ENCODE measurements at regions of chr6 and their contacts with region 1.

Region 1: GRCh38 chr6:47413752-47414422 is 63.7 kb upstream of the CD2AP start:
- DNase-seq: peak; percentile 61
- ATAC-seq: peak; percentile 90
- H3K4me3 ChIP-seq: peak overlapping the region; percentile 41 to 53
- H3K27ac ChIP-seq: peak overlapping the region; percentile 71; the same call in 1 of the 2 replicates
- H3K4me1 ChIP-seq: peaks cover 2% of the 10 kb centered on the region; the same call in 1 of the 2 replicates
- H3K27me3 ChIP-seq: no peaks in the 10 kb centered on the region
- CTCF ChIP-seq: peak; percentile 82

Region 2: GRCh38 chr6:47605500-47605899 is 191.6 kb after region 1 on chr6:
- CTCF ChIA-PET with region 1: no interaction called
- POLR2A ChIA-PET with region 1: no interaction called
- in situ Hi-C with region 1: no loop called
- intact Hi-C with region 1: loop called (anchors 5 kb)
- DNase-seq: no peak
- ATAC-seq: no peak
- H3K4me3 ChIP-seq: no peak overlapping the region
- H3K27ac ChIP-seq: no peak overlapping the region
- H3K4me1 ChIP-seq: no peaks in the 10 kb centered on the region
- H3K27me3 ChIP-seq: no peaks in the 10 kb centered on the region
- CTCF ChIP-seq: no peak

Region 3: GRCh38 chr6:47733879-47734558 is 320.1 kb after region 1 on chr6:
- CTCF ChIA-PET with region 1: no interaction called
- POLR2A ChIA-PET with region 1: no interaction called
- in situ Hi-C with region 1: no loop called
- intact Hi-C with region 1: loop called (anchors 10 kb)
- DNase-seq: no peak
- ATAC-seq: peak; percentile 65; the same call in 1 of the 2 replicates
- H3K4me3 ChIP-seq: no peak overlapping the region
- H3K27ac ChIP-seq: no peak overlapping the region
- H3K4me1 ChIP-seq: no peaks in the 10 kb centered on the region
- H3K27me3 ChIP-seq: no peaks in the 10 kb centered on the region
- CTCF ChIP-seq: peak; percentile 30; the same call in 1 of the 2 replicates

Region 4: GRCh38 chr6:47780510-47781356 is 366.8 kb after region 1 on chr6:
- CTCF ChIA-PET with region 1: no interaction called
- POLR2A ChIA-PET with region 1: no interaction called
- in situ Hi-C with region 1: no loop called
- intact Hi-C with region 1: loop called (anchors 2 kb)
- DNase-seq: peak; percentile 76
- ATAC-seq: peak; percentile 93
- H3K4me3 ChIP-seq: no peak overlapping the region
- H3K27ac ChIP-seq: no peak overlapping the region
- H3K4me1 ChIP-seq: peaks cover 8% of the 10 kb centered on the region; the same call in 1 of the 2 replicates
- H3K27me3 ChIP-seq: peaks cover 3% of the 10 kb centered on the region
- CTCF ChIP-seq: peak; percentile 78